T-cell (primary cell): ENCODE measurements at regions of chr6 and their contacts with region 1.

Region 1: DNA sequence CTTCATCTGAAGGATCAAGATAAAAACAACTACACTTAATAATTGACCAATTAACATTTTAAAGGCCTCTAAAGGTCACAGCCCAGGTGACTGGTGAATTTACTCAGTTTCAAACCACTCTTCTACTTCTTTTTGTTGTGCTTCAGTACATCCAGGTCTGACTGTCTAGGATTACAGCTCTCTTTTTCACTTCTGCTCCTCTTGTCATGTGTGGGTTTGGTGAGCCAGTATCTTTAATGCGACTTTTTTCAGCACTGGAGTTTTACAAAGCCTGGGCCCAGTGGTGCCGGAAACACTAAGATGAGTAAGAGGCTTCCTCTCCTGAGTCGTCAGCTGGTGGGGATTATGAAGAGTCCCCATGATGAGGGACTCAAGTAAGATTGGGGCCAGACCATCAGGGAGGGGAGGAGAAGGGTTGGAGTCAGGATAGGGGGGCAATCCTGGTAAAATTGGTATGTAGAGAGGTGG is 27.0 kb downstream of the HECA start:
- DNase-seq: peak; percentile 32 to 78 (median 56)
- ATAC-seq: peak; percentile 60 to 69 (median 67)
- H3K4me3 ChIP-seq: peak overlapping the region; percentile 2 to 25
- H3K4me3 Mint-ChIP-seq: peak overlapping the region; percentile 72 to 82 (median 75)
- H3K27ac ChIP-seq: peak overlapping the region; percentile 66
- H3K27ac Mint-ChIP-seq: peak overlapping the region; percentile 96 to 97
- H3K4me1 ChIP-seq: peaks cover 58 to 91% of the 10 kb centered on the region in 2 experiments
- H3K4me1 Mint-ChIP-seq: peaks cover 93 to 96% (median 94%) of the 10 kb centered on the region in 3 donors
- H3K27me3 ChIP-seq: no peaks in the 10 kb centered on the region
- H3K27me3 Mint-ChIP-seq: no peaks in the 10 kb centered on the region

Region 2: DNA sequence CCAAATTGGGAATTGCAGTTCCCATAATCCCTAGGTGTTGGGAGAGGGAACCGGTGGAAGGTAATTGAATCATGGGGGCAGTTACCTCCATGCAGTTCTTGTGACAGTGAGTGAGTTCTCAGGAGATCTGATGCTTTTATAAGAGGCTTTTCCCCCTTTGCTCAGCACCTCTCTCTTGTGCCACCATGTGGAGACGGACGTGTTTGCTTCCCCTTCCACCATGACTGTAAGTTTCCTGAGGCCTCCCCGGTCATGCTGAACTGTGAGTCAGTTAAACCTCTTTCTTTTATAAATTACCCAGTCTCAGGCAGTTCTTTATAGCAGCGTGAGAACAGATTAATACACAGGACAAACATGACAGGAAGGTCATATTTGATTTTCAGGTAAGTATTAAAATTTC is 52.3 kb before region 1 on chr6:
- CTCF ChIA-PET with region 1: no interaction called
- POLR2A ChIA-PET with region 1: interaction called in 1 of 2 experiments, 18 read pairs
- DNase-seq: peak in 12 of 35 experiments; percentile 8 to 40 (median 25)
- ATAC-seq: no peak
- H3K4me3 ChIP-seq: no peak overlapping the region
- H3K4me3 Mint-ChIP-seq: no peak overlapping the region
- H3K27ac ChIP-seq: no peak overlapping the region
- H3K27ac Mint-ChIP-seq: peak overlapping the region; percentile 41 to 96
- H3K4me1 ChIP-seq: peaks cover 30 to 31% of the 10 kb centered on the region in 2 experiments
- H3K4me1 Mint-ChIP-seq: peaks cover 54 to 56% (median 56%) of the 10 kb centered on the region in 3 donors
- H3K27me3 ChIP-seq: no peaks in the 10 kb centered on the region
- H3K27me3 Mint-ChIP-seq: no peaks in the 10 kb centered on the region

Region 3: GRCh38 chr6:139119552-139119951 is 42.3 kb before region 1 on chr6:
- CTCF ChIA-PET with region 1: interaction called in 1 of 2 experiments, 5 read pairs
- POLR2A ChIA-PET with region 1: interaction called, 3 to 10 read pairs
- DNase-seq: no peak
- ATAC-seq: no peak
- H3K4me3 ChIP-seq: no peak overlapping the region
- H3K4me3 Mint-ChIP-seq: no peak overlapping the region
- H3K27ac ChIP-seq: no peak overlapping the region
- H3K27ac Mint-ChIP-seq: peak overlapping the region in 1 of 2 donors; percentile 63
- H3K4me1 ChIP-seq: peaks cover 17 to 32% of the 10 kb centered on the region in 2 experiments
- H3K4me1 Mint-ChIP-seq: peaks cover 38 to 43% (median 43%) of the 10 kb centered on the region in 3 donors
- H3K27me3 ChIP-seq: no peaks in the 10 kb centered on the region
- H3K27me3 Mint-ChIP-seq: no peaks in the 10 kb centered on the region

Region 4: GRCh38 chr6:139146317-139146726 is 15.5 kb before region 1 on chr6:
- CTCF ChIA-PET with region 1: interaction called in 1 of 2 experiments, 4 read pairs
- POLR2A ChIA-PET with region 1: interaction called, 9 to 25 read pairs
- DNase-seq: no peak
- ATAC-seq: peak; percentile 31 to 49 (median 34)
- H3K4me3 ChIP-seq: peak overlapping the region in 1 of 2 donors; percentile 26
- H3K4me3 Mint-ChIP-seq: peak overlapping the region; percentile 69 to 83 (median 72)
- H3K27ac ChIP-seq: peak overlapping the region; percentile 36
- H3K27ac Mint-ChIP-seq: peak overlapping the region; percentile 90 to 92
- H3K4me1 ChIP-seq: peaks cover 67 to 72% of the 10 kb centered on the region in 2 experiments
- H3K4me1 Mint-ChIP-seq: peaks cover 93 to 95% (median 94%) of the 10 kb centered on the region in 3 donors
- H3K27me3 ChIP-seq: no peaks in the 10 kb centered on the region
- H3K27me3 Mint-ChIP-seq: no peaks in the 10 kb centered on the region

Region 5: GRCh38 chr6:139278190-139278589 is 116.3 kb after region 1 on chr6:
- CTCF ChIA-PET with region 1: no interaction called
- POLR2A ChIA-PET with region 1: interaction called in 1 of 2 experiments, 13 read pairs
- DNase-seq: no peak
- ATAC-seq: no peak
- H3K4me3 ChIP-seq: no peak overlapping the region
- H3K4me3 Mint-ChIP-seq: no peak overlapping the region
- H3K27ac ChIP-seq: no peak overlapping the region
- H3K27ac Mint-ChIP-seq: peak overlapping the region; percentile 64 to 82
- H3K4me1 ChIP-seq: peaks cover 7 to 10% of the 10 kb centered on the region in 2 experiments
- H3K4me1 Mint-ChIP-seq: peaks cover 27 to 34% (median 28%) of the 10 kb centered on the region in 3 donors
- H3K27me3 ChIP-seq: no peaks in the 10 kb centered on the region
- H3K27me3 Mint-ChIP-seq: no peaks in the 10 kb centered on the region

Region 6: DNA sequence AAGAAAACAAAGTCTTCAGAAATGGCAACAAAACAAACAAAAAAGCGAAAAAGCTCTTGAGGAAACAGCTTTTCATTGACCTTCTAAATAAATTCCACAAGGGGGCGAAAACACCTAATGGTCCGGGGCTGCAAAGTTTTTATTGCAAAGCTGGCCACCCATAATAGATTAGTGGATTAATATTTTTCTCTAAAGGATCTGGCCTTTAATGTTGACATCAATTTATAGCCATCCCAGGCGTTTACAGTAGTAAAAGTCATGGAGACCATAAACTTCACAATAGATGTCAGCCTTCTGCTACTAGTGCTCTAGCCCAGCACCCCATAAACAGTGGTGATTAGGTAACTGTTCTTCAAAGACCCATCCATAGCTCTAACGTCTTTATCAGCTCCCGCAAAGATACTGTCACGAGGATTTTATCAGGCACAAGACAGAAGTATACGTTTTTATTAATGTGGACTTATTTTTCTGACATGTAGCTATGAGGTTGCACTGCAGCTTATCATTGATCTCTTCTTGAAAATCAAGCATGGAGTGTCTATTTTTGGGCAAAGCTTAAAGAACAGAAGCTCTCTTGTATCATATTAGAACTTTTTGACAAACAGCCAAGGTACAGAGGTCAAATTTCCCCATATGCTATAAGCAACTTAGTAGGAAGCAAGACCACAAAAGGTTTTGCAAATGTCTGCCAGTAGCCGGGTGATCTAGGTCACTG is 207.9 kb after region 1 on chr6:
- CTCF ChIA-PET with region 1: interaction called, 8 to 12 read pairs
- POLR2A ChIA-PET with region 1: interaction called in 1 of 2 experiments, 7 read pairs
- DNase-seq: peak in 2 of 35 experiments; percentile 13 to 67
- ATAC-seq: no peak
- H3K4me3 ChIP-seq: peak overlapping the region in 1 of 2 donors; percentile 13
- H3K4me3 Mint-ChIP-seq: peak overlapping the region; percentile 60 to 100 (median 99)
- H3K27ac ChIP-seq: peak overlapping the region; percentile 93
- H3K27ac Mint-ChIP-seq: peak overlapping the region; percentile 97 to 99
- H3K4me1 ChIP-seq: peaks cover 18 to 19% of the 10 kb centered on the region in 2 experiments
- H3K4me1 Mint-ChIP-seq: peaks cover 42 to 48% (median 47%) of the 10 kb centered on the region in 3 donors
- H3K27me3 ChIP-seq: no peaks in the 10 kb centered on the region
- H3K27me3 Mint-ChIP-seq: no peaks in the 10 kb centered on the region

Region 7: DNA sequence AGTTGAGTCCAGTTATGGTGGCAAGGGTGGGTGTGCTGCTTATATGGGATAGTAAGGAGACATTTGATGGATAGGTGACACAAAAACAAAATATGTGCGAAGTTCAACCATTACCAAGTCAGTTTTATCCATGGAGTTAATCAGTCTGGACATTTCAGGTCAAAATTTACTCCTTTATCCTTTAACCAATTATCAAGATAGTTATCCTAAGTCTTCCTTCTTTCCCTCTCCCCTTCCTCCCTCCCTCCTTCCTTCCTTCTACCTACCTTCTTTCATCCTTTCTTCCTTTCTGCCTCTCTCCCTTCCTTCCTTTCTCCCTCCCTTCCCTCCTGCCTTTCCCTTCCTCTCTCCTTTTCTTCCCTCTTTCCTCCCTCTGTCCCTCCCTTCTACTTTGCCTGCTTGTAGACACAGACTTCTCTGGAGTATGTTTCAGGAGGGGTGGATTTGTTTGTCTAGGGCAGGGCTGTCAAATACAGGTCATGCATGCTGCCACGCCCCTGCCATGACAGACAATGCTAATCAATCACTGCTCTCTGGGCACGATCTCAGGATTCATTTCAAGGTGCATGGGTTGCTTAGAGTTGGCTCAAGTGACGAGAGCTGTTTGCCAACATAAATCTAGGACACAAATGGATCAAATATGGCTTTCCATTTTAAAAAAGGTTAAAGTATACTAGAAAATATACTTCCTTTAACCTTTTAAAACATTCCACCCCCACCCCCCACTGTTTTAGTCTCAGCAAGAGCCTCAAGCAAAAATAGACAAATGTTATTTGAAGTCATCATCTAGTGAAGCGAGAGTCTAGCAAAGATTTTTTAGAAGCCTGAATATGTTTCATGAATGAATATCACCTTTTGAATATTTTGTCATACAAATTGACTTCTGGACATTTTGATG is 494.2 kb after region 1 on chr6:
- CTCF ChIA-PET with region 1: no interaction called
- POLR2A ChIA-PET with region 1: no interaction called
- DNase-seq: no peak
- ATAC-seq: no peak
- H3K4me3 ChIP-seq: no peak overlapping the region
- H3K4me3 Mint-ChIP-seq: no peak overlapping the region
- H3K27ac ChIP-seq: no peak overlapping the region
- H3K27ac Mint-ChIP-seq: no peak overlapping the region
- H3K4me1 ChIP-seq: no peaks in the 10 kb centered on the region
- H3K4me1 Mint-ChIP-seq: no peaks in the 10 kb centered on the region
- H3K27me3 ChIP-seq: peaks cover 0 to 2% of the 10 kb centered on the region in 2 experiments
- H3K27me3 Mint-ChIP-seq: no peaks in the 10 kb centered on the region

Region 8: GRCh38 chr6:139801571-139802321 is 639.9 kb after region 1 on chr6:
- CTCF ChIA-PET with region 1: no interaction called
- POLR2A ChIA-PET with region 1: no interaction called
- DNase-seq: no peak
- ATAC-seq: no peak
- H3K4me3 ChIP-seq: no peak overlapping the region
- H3K4me3 Mint-ChIP-seq: no peak overlapping the region
- H3K27ac ChIP-seq: no peak overlapping the region
- H3K27ac Mint-ChIP-seq: no peak overlapping the region
- H3K4me1 ChIP-seq: no peaks in the 10 kb centered on the region
- H3K4me1 Mint-ChIP-seq: no peaks in the 10 kb centered on the region
- H3K27me3 ChIP-seq: peaks cover 0 to 12% of the 10 kb centered on the region in 2 experiments
- H3K27me3 Mint-ChIP-seq: peaks cover 3 to 21% of the 10 kb centered on the region in 2 donors

Region 9: DNA sequence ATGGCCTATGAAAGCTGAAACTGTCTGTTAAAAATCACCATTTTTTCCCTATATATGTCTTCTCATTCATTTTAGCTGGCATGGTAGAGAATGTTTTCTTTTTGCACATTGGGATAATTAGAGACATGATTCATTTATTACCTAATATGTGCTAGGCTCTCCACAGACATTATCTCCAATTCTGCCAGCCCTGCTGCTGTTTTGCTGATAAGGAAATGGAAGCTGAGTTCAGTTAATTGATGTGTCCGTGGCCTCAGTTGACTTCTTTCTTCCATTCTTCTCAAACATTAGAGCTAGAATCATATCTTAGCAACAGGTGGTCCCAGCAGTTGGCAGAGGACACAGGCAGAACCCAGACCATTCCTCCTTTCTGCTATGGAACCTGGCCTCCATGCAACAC is 856.7 kb after region 1 on chr6:
- CTCF ChIA-PET with region 1: no interaction called
- POLR2A ChIA-PET with region 1: no interaction called
- DNase-seq: no peak
- ATAC-seq: no peak
- H3K4me3 ChIP-seq: no peak overlapping the region
- H3K4me3 Mint-ChIP-seq: no peak overlapping the region
- H3K27ac ChIP-seq: no peak overlapping the region
- H3K27ac Mint-ChIP-seq: no peak overlapping the region
- H3K4me1 ChIP-seq: no peaks in the 10 kb centered on the region
- H3K4me1 Mint-ChIP-seq: no peaks in the 10 kb centered on the region
- H3K27me3 ChIP-seq: no peaks in the 10 kb centered on the region
- H3K27me3 Mint-ChIP-seq: peaks cover 10 to 15% of the 10 kb centered on the region in 2 donors